ENCODE measurements at regions of chr6 and their contacts with region 1.

Region 1: DNA sequence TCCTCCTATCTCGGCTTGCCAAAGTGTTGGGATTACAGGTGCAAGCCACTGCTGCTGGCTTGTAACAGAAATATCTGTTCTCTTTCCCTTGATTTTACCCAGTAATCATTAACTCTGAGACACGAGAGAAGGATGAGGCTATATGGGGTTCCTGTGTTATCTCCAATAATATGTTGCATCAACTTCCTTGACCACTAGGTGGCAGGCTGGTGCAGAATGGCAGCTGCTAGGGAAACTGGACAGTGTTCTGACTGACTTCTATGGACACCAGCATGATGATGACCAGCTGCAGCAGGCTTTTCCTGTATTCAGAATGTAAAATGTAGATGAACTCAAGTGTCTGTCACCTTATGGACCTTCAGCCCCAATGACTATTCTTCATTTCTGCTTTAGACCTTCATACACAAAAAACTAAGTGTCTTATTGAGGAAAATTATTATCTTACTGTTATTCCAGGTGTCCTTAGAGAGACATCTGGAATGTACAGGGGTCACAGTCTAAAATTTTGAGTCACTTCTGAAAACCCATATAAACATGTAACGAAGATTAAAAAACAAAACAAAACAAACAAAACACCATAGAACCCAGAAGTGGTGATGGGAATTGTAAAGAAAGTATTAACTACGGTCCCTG is 20.4 kb upstream of the CD109 start:
- DNase-seq: peak; percentile 68
- H3K4me3 ChIP-seq: no peak overlapping the region; a peak in 1 of 4 replicates
- H3K27ac ChIP-seq: no peak overlapping the region
- H3K4me1 ChIP-seq: no peaks in the 10 kb centered on the region
- H3K27me3 ChIP-seq: no peaks in the 10 kb centered on the region
- CTCF ChIP-seq: peak; percentile 95
- EP300 ChIP-seq: no peak
- RAD21 ChIP-seq: peak; percentile 79

Region 2: DNA sequence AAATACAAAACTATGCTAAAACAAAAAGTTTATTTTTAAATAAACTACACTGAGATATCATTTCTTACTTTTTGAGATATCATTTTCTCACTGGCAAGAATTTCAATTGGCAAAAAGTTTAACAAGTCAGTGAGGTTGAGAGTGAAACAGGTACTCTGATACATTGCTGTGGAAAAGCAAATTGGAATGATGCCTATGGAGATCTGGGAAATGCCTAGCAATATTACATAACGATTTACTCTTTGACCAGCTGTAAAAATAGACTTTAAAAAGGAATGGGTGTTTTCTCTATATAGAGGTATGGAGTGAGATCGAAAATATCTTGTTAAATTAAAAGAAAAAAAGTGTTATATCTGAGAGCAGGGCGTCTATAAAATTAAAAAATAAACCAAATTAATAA is 240.3 kb before region 1 on chr6:
- CTCF ChIA-PET with region 1: no interaction called
- POLR2A ChIA-PET with region 1: no interaction called
- DNase-seq: no peak
- H3K4me3 ChIP-seq: no peak overlapping the region
- H3K27ac ChIP-seq: no peak overlapping the region
- H3K4me1 ChIP-seq: no peaks in the 10 kb centered on the region
- H3K27me3 ChIP-seq: no peaks in the 10 kb centered on the region; the same call in 1 of the 2 replicates
- CTCF ChIP-seq: no peak
- EP300 ChIP-seq: no peak
- RAD21 ChIP-seq: no peak

Region 3: GRCh38 chr6:73624896-73625295 is 50.7 kb before region 1 on chr6:
- CTCF ChIA-PET with region 1: no interaction called
- POLR2A ChIA-PET with region 1: no interaction called
- DNase-seq: no peak
- H3K4me3 ChIP-seq: no peak overlapping the region
- H3K27ac ChIP-seq: no peak overlapping the region
- H3K4me1 ChIP-seq: no peaks in the 10 kb centered on the region
- H3K27me3 ChIP-seq: no peaks in the 10 kb centered on the region
- CTCF ChIP-seq: no peak
- EP300 ChIP-seq: no peak
- RAD21 ChIP-seq: no peak

Region 4: GRCh38 chr6:73653571-73654424 is 21.8 kb before region 1 on chr6 and contains the start of gene SLC17A5:
- CTCF ChIA-PET with region 1: interaction called, 12 read pairs
- POLR2A ChIA-PET with region 1: no interaction called
- DNase-seq: peak; percentile 95
- H3K4me3 ChIP-seq: peak within 1 kb of the TSS; percentile 86 to 92
- H3K27ac ChIP-seq: peak within 1 kb of the TSS; percentile 67 to 70
- H3K4me1 ChIP-seq: peaks cover 0 to 3% of the 10 kb centered on the region in 2 experiments; a peak in 2 of 4 replicates
- H3K27me3 ChIP-seq: no peaks in the 10 kb centered on the region
- CTCF ChIP-seq: no peak
- EP300 ChIP-seq: no peak
- RAD21 ChIP-seq: no peak
- polyA plus RNA-seq, gene SLC17A5: 9.2 and 14.0 TPM in 2 replicates

Region 5: DNA sequence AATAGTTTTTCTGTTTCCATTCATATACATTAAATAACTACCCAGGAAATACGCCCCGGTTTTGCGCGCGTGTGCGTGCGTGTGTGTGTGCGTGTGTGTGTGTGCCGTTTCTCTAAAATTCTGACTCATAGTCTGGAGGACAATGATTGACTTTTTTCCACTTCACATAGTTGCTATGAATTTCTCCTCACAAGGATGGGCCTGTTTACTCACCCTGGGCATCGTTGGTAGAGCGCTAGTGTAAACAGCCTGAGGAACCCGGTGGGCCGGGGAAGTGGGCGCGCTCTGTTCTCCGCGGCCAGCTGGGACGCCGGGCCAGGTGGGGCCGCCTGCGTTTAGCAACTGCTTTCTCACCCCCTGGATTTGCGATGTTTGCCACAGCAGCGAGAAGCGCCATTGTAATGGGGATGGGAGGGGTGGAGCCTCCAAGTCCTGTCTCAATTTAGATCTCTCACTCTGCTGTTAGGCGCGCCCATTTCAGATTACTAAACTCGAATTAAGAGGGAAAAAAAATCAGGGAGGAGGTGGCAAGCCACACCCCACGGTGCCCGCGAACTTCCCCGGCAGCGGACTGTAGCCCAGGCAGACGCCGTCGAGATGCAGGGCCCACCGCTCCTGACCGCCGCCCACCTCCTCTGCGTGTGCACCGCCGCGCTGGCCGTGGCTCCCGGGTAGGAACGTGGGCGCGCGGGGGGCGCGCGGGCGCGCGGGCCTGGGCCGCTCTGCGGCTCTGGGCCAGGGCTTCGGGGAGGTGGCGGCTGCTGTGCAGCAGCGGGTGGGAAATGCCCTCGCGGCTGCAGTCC is 20.2 kb after region 1 on chr6 and contains the start of gene CD109:
- CTCF ChIA-PET with region 1: interaction called, 16 read pairs
- POLR2A ChIA-PET with region 1: no interaction called
- DNase-seq: peak; percentile 49
- H3K4me3 ChIP-seq: peak within 1 kb of the TSS; percentile 56 to 73
- H3K27ac ChIP-seq: peak within 1 kb of the TSS; percentile 85 to 96
- H3K4me1 ChIP-seq: peaks cover 0 to 14% of the 10 kb centered on the region in 2 experiments; a peak in 1 of 4 replicates
- H3K27me3 ChIP-seq: no peaks in the 10 kb centered on the region
- CTCF ChIP-seq: no peak
- EP300 ChIP-seq: no peak
- RAD21 ChIP-seq: no peak
- polyA plus RNA-seq, gene CD109: 19.7 and 27.8 TPM in 2 replicates

Region 6: GRCh38 chr6:73732845-73733675 is 57.5 kb after region 1 on chr6:
- CTCF ChIA-PET with region 1: interaction called, 19 read pairs
- POLR2A ChIA-PET with region 1: no interaction called
- DNase-seq: peak; percentile 54
- H3K4me3 ChIP-seq: peak overlapping the region in 1 of 2 experiments; percentile 13; a peak in 1 of 4 replicates
- H3K27ac ChIP-seq: no peak overlapping the region
- H3K4me1 ChIP-seq: peaks cover 0 to 1% of the 10 kb centered on the region in 2 experiments; a peak in 1 of 4 replicates
- H3K27me3 ChIP-seq: no peaks in the 10 kb centered on the region
- CTCF ChIP-seq: peak; percentile 94
- EP300 ChIP-seq: no peak
- RAD21 ChIP-seq: peak; percentile 71

Measured in SK-N-SH (cell line).